ENCODE measurements at regions of chr2 and their contacts with region 1.

Region 1: DNA sequence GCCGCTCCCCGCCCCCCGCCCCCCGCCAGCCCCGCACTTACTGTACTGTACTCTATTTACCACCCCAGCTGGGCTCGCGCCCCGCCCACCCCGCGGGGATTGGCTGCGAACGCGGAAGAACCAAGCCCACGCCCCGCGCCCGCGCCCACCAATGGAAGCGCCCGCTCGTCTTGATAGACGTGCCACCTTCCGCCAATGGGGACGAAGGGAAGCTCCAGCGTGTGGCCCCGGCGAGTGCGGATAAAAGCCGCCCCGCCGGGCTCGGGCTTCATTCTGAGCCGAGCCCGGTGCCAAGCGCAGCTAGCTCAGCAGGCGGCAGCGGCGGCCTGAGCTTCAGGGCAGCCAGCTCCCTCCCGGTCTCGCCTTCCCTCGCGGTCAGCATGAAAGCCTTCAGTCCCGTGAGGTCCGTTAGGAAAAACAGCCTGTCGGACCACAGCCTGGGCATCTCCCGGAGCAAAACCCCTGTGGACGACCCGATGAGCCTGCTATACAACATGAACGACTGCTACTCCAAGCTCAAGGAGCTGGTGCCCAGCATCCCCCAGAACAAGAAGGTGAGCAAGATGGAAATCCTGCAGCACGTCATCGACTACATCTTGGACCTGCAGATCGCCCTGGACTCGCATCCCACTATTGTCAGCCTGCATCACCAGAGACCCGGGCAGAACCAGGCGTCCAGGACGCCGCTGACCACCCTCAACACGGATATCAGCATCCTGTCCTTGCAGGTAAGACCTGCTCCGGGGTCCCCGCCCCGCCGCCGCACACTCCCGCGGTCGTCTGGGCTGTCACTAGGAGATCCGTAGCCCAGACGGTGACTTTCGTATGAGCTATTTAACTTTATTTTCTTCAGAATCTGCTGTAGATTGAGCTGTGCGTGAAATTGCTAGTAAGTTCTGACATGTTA is at the start of gene ID2:
- DNase-seq: peak; percentile 96 to 100 (median 99)
- ATAC-seq: peak; percentile 74
- H3K4me3 ChIP-seq: peak within 1 kb of the TSS; percentile 89 to 94
- H3K4me3 Mint-ChIP-seq: peak within 1 kb of the TSS; percentile 99
- H3K27ac ChIP-seq: peak within 1 kb of the TSS; percentile 80 to 82
- H3K27ac Mint-ChIP-seq: peak within 1 kb of the TSS; percentile 97
- H3K4me1 ChIP-seq: peaks cover 40% of the 10 kb centered on the region
- H3K4me1 Mint-ChIP-seq: peaks cover 45% of the 10 kb centered on the region
- H3K27me3 ChIP-seq: peaks cover 3 to 9% of the 10 kb centered on the region in 2 experiments
- H3K27me3 Mint-ChIP-seq: peaks cover 15% of the 10 kb centered on the region
- CTCF ChIP-seq: no peak
- total RNA-seq, gene ID2: 290 to 298 TPM

Region 2: GRCh38 chr2:6865346-6866274 is 1816.4 kb before region 1 on chr2 and contains the start of gene CMPK2:
- CTCF ChIA-PET with region 1: no interaction called
- POLR2A ChIA-PET with region 1: no interaction called
- intact Hi-C with region 1: loop called in 1 of 2 experiments (anchors 10 kb)
- DNase-seq: peak; percentile 53 to 90 (median 82)
- ATAC-seq: peak; percentile 75
- H3K4me3 ChIP-seq: peak within 1 kb of the TSS; percentile 75 to 86
- H3K4me3 Mint-ChIP-seq: peak within 1 kb of the TSS; percentile 99
- H3K27ac ChIP-seq: peak within 1 kb of the TSS; percentile 33 to 72
- H3K27ac Mint-ChIP-seq: peak within 1 kb of the TSS; percentile 96
- H3K4me1 ChIP-seq: peaks cover 19% of the 10 kb centered on the region
- H3K4me1 Mint-ChIP-seq: peaks cover 17% of the 10 kb centered on the region
- H3K27me3 ChIP-seq: no peaks in the 10 kb centered on the region
- H3K27me3 Mint-ChIP-seq: no peaks in the 10 kb centered on the region
- CTCF ChIP-seq: peak; percentile 58
- total RNA-seq, gene CMPK2: 3.0 to 4.0 TPM

Region 3: GRCh38 chr2:7203055-7203467 is 1479.0 kb before region 1 on chr2:
- CTCF ChIA-PET with region 1: interaction called, 7 read pairs
- POLR2A ChIA-PET with region 1: interaction called, 3 read pairs
- intact Hi-C with region 1: loop called (anchors 1 kb)
- DNase-seq: peak; percentile 32 to 77 (median 59)
- ATAC-seq: peak; percentile 69
- H3K4me3 ChIP-seq: no peak overlapping the region
- H3K4me3 Mint-ChIP-seq: no peak overlapping the region
- H3K27ac ChIP-seq: no peak overlapping the region
- H3K27ac Mint-ChIP-seq: no peak overlapping the region
- H3K4me1 ChIP-seq: no peaks in the 10 kb centered on the region
- H3K4me1 Mint-ChIP-seq: peaks cover 2% of the 10 kb centered on the region
- H3K27me3 ChIP-seq: no peaks in the 10 kb centered on the region
- H3K27me3 Mint-ChIP-seq: no peaks in the 10 kb centered on the region
- CTCF ChIP-seq: peak; percentile 95

Region 4: DNA sequence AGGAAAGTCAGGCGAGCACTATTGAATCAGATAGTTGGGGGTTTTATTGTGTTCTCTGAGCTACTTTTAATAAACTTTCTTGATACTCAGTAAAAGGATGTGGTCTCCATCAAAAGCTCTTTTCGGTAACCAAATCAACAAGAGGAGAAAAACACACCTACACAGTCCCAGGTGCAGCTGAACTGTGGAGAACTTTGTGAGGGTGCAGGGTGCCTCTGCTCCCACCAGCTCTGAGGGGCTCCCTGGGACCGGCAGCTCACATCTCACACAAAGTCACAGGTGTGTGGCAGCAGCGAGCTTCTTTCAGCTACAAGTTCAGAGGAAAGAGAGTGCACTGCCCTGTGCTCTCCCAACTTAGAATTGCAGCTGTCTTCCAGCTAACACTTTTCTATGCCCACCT is 1114.4 kb before region 1 on chr2:
- CTCF ChIA-PET with region 1: interaction called, 3 read pairs
- POLR2A ChIA-PET with region 1: interaction called, 24 read pairs
- intact Hi-C with region 1: loop called (anchors 1 to 5 kb)
- DNase-seq: peak; percentile 35 to 88 (median 66)
- ATAC-seq: peak; percentile 92
- H3K4me3 ChIP-seq: no peak overlapping the region
- H3K4me3 Mint-ChIP-seq: peak overlapping the region; percentile 32
- H3K27ac ChIP-seq: peak overlapping the region; percentile 34 to 53
- H3K27ac Mint-ChIP-seq: peak overlapping the region; percentile 87
- H3K4me1 ChIP-seq: peaks cover 61% of the 10 kb centered on the region
- H3K4me1 Mint-ChIP-seq: peaks cover 71% of the 10 kb centered on the region
- H3K27me3 ChIP-seq: no peaks in the 10 kb centered on the region
- H3K27me3 Mint-ChIP-seq: no peaks in the 10 kb centered on the region
- CTCF ChIP-seq: no peak

Region 5: GRCh38 chr2:8477552-8478470 is 204.2 kb before region 1 on chr2:
- CTCF ChIA-PET with region 1: no interaction called
- POLR2A ChIA-PET with region 1: interaction called, 9 read pairs
- intact Hi-C with region 1: loop called in 1 of 2 experiments (anchors 5 kb)
- DNase-seq: peak in 2 of 9 experiments; percentile 55 to 72
- ATAC-seq: peak; percentile 53
- H3K4me3 ChIP-seq: peak overlapping the region in 1 of 2 experiments; percentile 21
- H3K4me3 Mint-ChIP-seq: peak overlapping the region; percentile 62
- H3K27ac ChIP-seq: peak overlapping the region in 1 of 2 experiments; percentile 65
- H3K27ac Mint-ChIP-seq: peak overlapping the region; percentile 89
- H3K4me1 ChIP-seq: peaks cover 38% of the 10 kb centered on the region
- H3K4me1 Mint-ChIP-seq: peaks cover 73% of the 10 kb centered on the region
- H3K27me3 ChIP-seq: no peaks in the 10 kb centered on the region
- H3K27me3 Mint-ChIP-seq: no peaks in the 10 kb centered on the region
- CTCF ChIP-seq: no peak

Region 6: GRCh38 chr2:8583400-8584173 is 98.5 kb before region 1 on chr2:
- CTCF ChIA-PET with region 1: interaction called, 5 read pairs
- POLR2A ChIA-PET with region 1: interaction called, 3 read pairs
- intact Hi-C with region 1: loop called (anchors 2 to 5 kb)
- DNase-seq: peak; percentile 49 to 83 (median 71)
- ATAC-seq: peak; percentile 92
- H3K4me3 ChIP-seq: peak overlapping the region; percentile 10 to 29
- H3K4me3 Mint-ChIP-seq: peak overlapping the region; percentile 61
- H3K27ac ChIP-seq: no peak overlapping the region
- H3K27ac Mint-ChIP-seq: no peak overlapping the region
- H3K4me1 ChIP-seq: peaks cover 24% of the 10 kb centered on the region
- H3K4me1 Mint-ChIP-seq: peaks cover 46% of the 10 kb centered on the region
- H3K27me3 ChIP-seq: peaks cover 3 to 5% of the 10 kb centered on the region in 2 experiments
- H3K27me3 Mint-ChIP-seq: peaks cover 4% of the 10 kb centered on the region
- CTCF ChIP-seq: no peak

Region 7: DNA sequence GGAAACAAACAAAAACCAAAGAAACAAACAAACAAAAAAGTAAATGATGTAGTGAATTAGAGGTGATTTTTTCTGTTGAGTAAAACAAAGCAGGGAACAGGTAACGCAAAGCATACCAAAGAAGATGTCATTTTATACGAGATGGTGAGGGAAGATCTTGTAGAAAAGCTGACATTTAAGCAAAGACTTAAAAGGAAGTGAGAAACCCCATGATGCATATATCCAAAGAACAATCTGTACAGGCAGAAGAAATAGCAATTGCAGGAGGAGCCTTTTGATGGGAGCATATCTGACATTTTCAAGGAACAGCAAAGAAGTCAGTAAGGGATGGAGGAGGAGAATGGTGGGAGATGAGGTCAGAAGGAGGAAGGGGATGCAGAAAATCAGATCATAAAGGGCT is 92.3 kb after region 1 on chr2:
- CTCF ChIA-PET with region 1: no interaction called
- POLR2A ChIA-PET with region 1: no interaction called
- intact Hi-C with region 1: no loop called
- DNase-seq: no peak
- ATAC-seq: no peak
- H3K4me3 ChIP-seq: no peak overlapping the region
- H3K4me3 Mint-ChIP-seq: no peak overlapping the region
- H3K27ac ChIP-seq: no peak overlapping the region
- H3K27ac Mint-ChIP-seq: no peak overlapping the region
- H3K4me1 ChIP-seq: no peaks in the 10 kb centered on the region
- H3K4me1 Mint-ChIP-seq: no peaks in the 10 kb centered on the region
- H3K27me3 ChIP-seq: no peaks in the 10 kb centered on the region
- H3K27me3 Mint-ChIP-seq: no peaks in the 10 kb centered on the region
- CTCF ChIP-seq: no peak

Region 8: GRCh38 chr2:10043906-10044601 is 1362.0 kb after region 1 on chr2:
- CTCF ChIA-PET with region 1: no interaction called
- POLR2A ChIA-PET with region 1: no interaction called
- intact Hi-C with region 1: loop called in 1 of 2 experiments (anchors 10 kb)
- DNase-seq: peak; percentile 72 to 96 (median 94)
- ATAC-seq: peak; percentile 66
- H3K4me3 ChIP-seq: peak overlapping the region; percentile 40 to 47
- H3K4me3 Mint-ChIP-seq: peak overlapping the region; percentile 77
- H3K27ac ChIP-seq: peak overlapping the region; percentile 67 to 74
- H3K27ac Mint-ChIP-seq: peak overlapping the region; percentile 90
- H3K4me1 ChIP-seq: peaks cover 18% of the 10 kb centered on the region
- H3K4me1 Mint-ChIP-seq: peaks cover 21% of the 10 kb centered on the region
- H3K27me3 ChIP-seq: no peaks in the 10 kb centered on the region
- H3K27me3 Mint-ChIP-seq: no peaks in the 10 kb centered on the region
- CTCF ChIP-seq: no peak